Common myeloid progenitor, CD34-positive (primary cell): ENCODE measurements at regions of chr7 and their contacts with region 1.

Region 1: DNA sequence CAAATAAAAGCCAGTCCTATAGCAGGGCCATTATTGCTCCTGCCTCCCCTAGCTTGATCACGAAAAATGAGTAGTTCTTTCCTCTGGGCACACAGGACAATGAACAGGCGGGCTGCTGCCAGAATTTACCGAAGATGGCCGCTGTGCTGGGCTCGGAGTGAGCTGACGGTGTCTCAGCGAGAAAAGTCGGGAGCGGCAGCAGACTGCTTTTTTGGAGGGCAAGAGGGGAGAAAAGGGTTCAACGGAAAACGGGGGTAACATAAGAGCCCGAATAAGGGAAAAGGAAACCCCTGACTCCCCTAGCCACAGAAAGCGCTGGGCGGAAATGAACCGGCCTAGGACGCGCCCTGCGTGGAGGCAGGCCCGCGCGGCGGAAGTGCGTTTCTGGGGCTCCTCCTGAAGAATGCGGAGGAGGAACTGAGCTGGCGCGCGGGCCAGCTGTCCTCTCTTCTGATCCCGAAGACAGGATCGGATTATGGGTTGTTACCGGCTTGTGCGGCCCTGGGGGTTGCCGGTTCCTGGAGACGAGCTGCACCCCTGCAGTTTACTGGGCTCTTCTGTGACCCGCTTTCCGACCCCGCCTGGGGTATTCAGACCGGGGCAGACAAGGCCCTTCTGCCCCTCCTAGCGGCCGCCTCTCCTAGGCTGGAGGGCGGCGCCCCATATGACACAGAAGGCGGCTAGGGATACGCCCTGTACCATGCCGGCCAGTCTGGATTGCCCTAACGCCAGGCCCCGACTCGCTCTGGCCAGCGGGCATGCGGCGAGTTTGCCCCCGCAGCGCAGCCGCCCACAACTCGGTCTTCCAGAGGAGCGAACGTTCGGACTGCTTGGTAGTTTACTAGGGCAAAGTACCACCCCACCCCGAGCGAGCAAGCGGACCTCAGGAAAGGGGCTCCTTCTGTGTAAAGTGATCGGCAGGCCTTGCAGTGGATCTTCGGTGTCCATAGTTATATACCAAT is 30.1 kb upstream of the KMT2E start:
- DNase-seq: peak; percentile 82 to 91 (median 86)
- H3K4me3 ChIP-seq: peak overlapping the region; percentile 76 to 91 (median 85)
- H3K27ac ChIP-seq: peak overlapping the region; percentile 98 to 99
- H3K4me1 ChIP-seq: peaks cover 13 to 48% (median 22%) of the 10 kb centered on the region in 4 experiments
- H3K27me3 ChIP-seq: no peaks in the 10 kb centered on the region

Region 2: DNA sequence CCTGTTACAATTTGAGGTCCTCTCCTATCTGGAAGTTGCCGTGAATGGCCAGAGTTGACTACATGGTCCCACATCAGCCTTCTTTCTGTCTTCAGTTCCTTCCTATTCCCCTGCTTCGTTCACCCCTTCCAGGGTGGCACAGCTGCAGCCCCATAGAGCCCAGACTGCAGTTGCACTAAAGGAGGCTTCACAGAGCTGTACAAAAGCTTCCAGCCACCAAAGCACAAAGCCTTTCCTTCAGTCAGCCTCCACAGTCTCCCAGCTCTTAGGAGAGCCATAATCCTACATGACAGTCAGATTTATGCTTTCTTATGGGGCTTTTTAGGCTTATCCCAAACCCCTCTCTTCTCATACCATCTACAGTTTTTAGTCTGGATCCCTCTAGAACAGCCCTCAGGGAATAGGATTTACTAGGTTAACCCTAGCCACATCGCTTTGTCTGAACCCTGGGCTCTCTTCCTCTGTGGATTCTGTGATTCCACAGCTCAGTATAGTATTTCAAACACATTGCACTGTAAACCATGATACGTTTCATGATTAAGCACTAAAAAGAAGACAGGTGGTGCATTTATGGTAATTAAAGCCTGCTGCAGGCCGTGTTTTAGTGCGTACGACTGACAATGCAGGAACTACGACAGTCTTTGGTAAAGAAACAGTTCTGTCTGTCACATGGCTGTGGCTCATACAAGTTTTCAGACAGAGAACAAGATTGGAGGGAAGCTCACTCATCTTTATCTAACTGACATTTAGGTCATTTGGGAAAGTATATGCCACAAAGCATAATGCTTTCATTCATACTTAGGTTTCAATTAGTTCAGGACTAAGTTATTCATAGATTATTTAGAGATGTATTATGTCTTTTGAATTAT is 178.2 kb before region 1 on chr7:
- CTCF ChIA-PET with region 1: no interaction called
- POLR2A ChIA-PET with region 1: no interaction called
- DNase-seq: no peak
- H3K4me3 ChIP-seq: no peak overlapping the region
- H3K27ac ChIP-seq: no peak overlapping the region
- H3K4me1 ChIP-seq: no peaks in the 10 kb centered on the region
- H3K27me3 ChIP-seq: peaks cover 0 to 7% (median 3%) of the 10 kb centered on the region in 5 experiments

Region 3: DNA sequence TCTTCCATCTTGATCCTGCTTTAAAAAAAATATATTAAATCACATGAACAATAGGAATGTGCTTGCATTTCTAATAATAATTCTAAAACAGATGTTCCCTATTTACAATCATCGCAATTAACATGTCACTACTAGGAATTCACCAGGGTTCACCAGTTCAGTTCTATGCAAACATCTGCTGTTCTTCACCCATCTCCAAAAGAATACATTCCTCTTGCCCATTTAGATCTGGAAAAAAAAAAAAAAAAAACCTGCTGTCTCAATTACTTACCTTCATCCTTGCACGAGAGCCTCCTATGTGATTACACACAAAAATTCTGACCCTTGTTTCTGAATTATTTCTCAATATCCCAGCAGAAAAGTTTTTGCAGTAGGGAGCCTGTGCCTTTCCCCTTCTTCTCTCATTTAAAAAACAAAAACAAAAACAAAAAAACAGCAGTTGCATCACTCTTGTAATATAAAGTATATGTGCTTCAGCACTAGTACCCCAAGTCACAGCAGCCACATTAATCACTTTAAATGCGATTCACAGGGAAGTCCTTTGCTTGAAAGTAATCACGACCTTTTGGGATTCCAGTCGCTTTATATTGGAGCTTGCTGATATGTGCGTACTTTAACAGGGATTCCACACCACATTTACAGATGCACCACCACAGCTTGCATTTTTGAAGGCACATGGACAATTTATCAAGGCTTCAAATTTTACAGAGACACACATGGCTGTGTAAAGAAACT is 164.5 kb before region 1 on chr7:
- CTCF ChIA-PET with region 1: no interaction called
- POLR2A ChIA-PET with region 1: no interaction called
- DNase-seq: no peak
- H3K4me3 ChIP-seq: no peak overlapping the region
- H3K27ac ChIP-seq: no peak overlapping the region
- H3K4me1 ChIP-seq: no peaks in the 10 kb centered on the region
- H3K27me3 ChIP-seq: peaks cover 0 to 18% (median 0%) of the 10 kb centered on the region in 5 experiments

Region 4: DNA sequence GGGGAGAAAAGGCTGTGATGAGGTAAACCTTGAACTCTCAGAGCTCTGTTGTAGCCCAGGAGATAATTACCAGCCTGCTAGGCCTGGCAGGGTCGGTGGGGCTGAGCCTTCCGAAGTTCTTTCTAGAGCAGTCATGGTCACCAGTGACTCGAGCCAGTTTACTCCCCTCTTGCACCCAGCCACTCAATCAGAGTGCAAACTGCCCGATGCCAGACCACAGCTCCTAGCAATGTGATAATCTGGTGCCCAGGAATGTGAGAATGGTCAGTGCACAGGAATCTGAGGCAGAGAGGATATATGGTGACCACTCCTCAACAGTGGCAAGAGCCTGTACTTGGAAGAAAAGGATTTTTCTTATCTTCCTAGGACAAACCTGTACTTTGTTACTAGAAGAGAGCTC is 16.3 kb before region 1 on chr7:
- CTCF ChIA-PET with region 1: interaction called, 16 read pairs
- POLR2A ChIA-PET with region 1: interaction called, 3 read pairs
- DNase-seq: no peak
- H3K4me3 ChIP-seq: no peak overlapping the region
- H3K27ac ChIP-seq: no peak overlapping the region
- H3K4me1 ChIP-seq: peaks cover 5 to 13% (median 9%) of the 10 kb centered on the region in 4 experiments
- H3K27me3 ChIP-seq: no peaks in the 10 kb centered on the region

Region 5: DNA sequence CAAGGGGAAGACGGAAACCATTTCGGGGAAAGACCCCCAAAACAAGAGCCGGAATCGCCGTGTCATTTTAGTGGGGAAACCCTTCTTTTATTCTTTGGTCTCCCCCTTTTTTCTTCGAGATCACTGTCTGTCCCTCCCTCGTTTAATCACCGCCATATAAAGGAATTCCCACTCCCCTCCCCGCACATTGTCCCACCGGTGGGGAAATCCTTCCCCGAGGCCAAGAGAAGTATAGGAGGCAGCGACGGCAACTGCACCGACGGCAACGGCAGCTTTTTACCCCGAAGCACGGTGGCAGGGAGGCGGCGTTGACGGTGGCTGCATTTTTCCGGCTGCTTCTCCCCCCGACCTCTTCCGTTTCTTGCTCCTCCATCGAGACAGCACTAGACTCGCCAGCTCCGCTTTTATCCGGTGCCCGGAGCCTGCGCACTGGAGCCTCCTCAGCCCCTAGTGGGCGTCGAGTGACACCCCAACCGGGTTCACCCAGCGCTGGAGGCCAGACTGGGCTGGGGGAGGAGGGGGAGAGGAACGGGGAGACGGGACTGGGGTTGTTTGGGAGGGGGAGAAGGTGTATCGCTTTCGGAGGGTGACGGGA is 29.5 kb after region 1 on chr7:
- CTCF ChIA-PET with region 1: interaction called, 316 read pairs
- POLR2A ChIA-PET with region 1: interaction called, 120 read pairs
- DNase-seq: peak; percentile 93 to 96 (median 96)
- H3K4me3 ChIP-seq: peak overlapping the region; percentile 91 to 100 (median 99)
- H3K27ac ChIP-seq: peak overlapping the region; percentile 100
- H3K4me1 ChIP-seq: peaks cover 36 to 61% (median 43%) of the 10 kb centered on the region in 4 experiments
- H3K27me3 ChIP-seq: no peaks in the 10 kb centered on the region

Region 6: DNA sequence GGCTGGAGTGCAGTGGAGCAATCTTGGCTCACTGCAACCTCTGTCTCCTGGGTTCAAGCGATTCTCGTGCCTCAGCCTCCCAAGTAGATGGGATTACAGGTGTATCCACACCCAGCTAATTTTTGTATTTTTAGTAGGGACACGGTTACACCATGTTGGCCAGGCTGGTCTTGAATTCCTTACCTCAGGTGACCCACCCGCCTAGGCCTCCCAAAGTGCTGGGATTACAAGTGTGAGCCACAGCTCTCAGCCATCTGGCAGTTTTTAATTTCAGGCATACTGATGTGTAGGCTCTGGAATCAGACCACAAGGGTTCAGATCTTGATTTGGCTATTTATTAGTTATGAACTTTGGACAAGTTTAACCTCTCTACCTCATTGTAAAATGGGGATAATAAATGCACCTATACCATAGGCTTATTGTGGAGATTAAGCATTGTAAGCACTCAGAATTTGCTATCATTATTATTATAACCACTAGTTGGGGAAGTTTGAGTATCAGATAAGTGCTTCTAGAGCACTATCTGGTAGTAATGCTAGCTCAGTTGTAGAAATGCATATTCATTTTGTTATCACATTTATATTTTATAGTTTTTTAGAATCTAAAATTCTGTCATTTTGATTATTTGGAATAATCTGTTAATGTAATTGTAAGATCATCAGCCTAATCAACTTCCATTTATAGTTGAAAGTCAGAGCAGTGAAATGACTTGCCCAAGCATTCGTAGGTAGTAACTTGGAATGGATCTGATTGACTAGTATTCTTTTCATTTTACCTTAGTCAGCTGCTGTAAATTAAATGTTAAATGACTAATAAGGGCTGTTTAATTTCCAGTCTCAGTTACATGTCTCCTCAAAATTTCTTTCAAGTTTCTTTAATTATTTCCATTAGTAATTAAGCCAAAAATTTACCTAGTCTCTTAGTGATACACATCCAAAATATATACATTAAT is 52.6 kb after region 1 on chr7:
- CTCF ChIA-PET with region 1: interaction called, 98 read pairs
- POLR2A ChIA-PET with region 1: interaction called, 3 read pairs
- DNase-seq: no peak
- H3K4me3 ChIP-seq: no peak overlapping the region
- H3K27ac ChIP-seq: no peak overlapping the region
- H3K4me1 ChIP-seq: peaks cover 0 to 12% (median 3%) of the 10 kb centered on the region in 4 experiments
- H3K27me3 ChIP-seq: no peaks in the 10 kb centered on the region

Region 7: GRCh38 chr7:105055621-105056020 is 71.8 kb after region 1 on chr7:
- CTCF ChIA-PET with region 1: interaction called, 22 read pairs
- POLR2A ChIA-PET with region 1: interaction called, 5 read pairs
- DNase-seq: peak in 1 of 3 donors; percentile 57
- H3K4me3 ChIP-seq: no peak overlapping the region
- H3K27ac ChIP-seq: no peak overlapping the region
- H3K4me1 ChIP-seq: no peaks in the 10 kb centered on the region
- H3K27me3 ChIP-seq: no peaks in the 10 kb centered on the region

Region 8: GRCh38 chr7:105304040-105304895 is 320.4 kb after region 1 on chr7:
- CTCF ChIA-PET with region 1: no interaction called
- POLR2A ChIA-PET with region 1: no interaction called
- DNase-seq: no peak
- H3K4me3 ChIP-seq: no peak overlapping the region
- H3K27ac ChIP-seq: no peak overlapping the region
- H3K4me1 ChIP-seq: no peaks in the 10 kb centered on the region
- H3K27me3 ChIP-seq: no peaks in the 10 kb centered on the region